Posterior vena cava (tissue), 2 donors: ENCODE measurements at regions of chr7 and their contacts with region 1.

Region 1: DNA sequence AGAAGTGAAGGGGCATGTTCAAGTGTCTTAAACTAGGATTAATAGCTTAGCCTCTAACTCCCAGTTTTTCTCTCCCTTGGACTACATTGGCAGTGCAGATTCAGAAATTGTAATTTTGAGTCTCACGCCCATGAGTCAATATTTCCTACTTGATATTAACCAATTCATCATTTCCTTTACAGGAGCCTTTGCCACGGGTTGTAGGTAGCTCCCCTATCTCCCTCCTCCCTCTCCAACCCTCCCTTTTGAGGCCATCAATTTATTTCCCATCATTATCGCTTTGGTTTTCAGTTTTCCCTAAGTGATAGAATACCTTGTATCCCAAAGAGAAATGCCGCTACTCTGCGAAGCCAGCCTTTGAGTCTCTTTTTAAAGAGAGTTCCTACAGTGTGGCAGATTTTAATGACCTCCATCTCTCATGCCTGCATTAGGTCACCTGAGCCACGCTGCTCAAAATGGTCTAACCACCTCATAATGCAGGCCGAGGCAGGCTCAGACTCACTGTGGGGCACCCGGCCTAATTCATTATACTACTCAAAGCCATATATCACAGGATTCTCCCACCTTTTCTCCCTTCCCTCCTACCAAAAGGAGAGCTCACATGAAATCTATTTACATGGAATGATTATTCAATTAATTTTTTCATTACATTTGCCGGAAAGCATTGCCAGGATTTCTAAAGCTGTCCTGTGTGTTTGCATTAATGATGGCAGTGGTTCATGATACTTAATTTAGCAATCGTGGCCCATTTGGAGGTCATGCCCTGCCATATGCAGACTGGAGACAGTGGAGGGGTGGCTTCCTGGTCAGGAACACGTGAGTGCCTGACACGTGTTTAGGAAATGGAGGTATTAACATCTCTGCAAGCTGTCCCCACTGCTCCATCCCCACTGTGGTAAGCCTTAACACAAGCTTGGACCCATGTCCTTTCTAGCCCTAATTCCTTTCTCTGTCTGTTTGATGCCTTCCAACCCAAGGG is 448.2 kb upstream of the AUTS2 start:
- DNase-seq: no peak

Region 2: DNA sequence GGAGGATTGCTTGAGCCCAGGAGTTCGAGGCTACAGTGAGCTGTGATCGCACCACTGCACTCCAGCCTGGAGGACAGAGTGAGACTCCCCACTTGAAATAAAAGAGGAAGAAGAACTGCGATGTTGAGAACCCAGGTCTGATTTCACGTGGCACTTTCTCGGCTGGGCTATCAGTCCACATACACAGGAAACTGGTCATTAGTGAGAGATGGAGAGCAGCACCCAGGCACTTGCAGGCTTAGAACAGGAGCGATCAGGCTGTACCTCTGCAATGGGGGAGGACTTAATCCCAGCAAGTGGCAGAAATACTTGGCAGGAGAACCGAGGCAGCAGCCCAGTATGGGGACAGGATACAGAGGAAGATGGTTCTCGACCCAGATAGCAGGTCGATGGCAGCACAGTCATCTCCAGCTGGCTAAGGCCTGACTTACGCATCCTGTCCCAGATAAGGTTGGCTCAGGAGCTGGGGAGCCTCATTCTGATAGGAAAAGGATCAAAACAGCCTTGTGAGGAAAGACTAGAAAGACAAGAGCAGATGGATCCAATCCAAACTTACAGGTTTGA is 39.5 kb before region 1 on chr7:
- intact Hi-C with region 1: loop called in 1 of 2 experiments (anchors 1 kb)
- DNase-seq: no peak

Region 3: DNA sequence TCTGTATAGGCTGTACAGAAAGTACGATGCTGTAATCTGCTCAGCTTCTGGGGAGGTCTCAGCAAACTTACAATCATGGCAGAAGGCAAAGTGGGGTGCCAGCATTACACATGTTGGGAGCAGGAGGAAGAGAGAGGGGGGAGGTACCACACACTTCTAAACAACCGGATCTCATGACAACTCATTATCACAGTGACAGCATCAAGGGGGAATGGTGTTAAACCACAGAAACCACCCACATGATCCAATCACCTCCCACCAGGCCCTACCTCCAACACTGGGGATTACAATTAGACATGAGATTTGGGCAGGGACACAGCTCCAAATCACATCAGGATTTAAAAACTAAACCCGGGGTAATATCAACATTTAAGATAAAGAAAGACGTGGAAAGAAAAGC is 20.6 kb before region 1 on chr7:
- intact Hi-C with region 1: no loop called
- DNase-seq: no peak

Region 4: DNA sequence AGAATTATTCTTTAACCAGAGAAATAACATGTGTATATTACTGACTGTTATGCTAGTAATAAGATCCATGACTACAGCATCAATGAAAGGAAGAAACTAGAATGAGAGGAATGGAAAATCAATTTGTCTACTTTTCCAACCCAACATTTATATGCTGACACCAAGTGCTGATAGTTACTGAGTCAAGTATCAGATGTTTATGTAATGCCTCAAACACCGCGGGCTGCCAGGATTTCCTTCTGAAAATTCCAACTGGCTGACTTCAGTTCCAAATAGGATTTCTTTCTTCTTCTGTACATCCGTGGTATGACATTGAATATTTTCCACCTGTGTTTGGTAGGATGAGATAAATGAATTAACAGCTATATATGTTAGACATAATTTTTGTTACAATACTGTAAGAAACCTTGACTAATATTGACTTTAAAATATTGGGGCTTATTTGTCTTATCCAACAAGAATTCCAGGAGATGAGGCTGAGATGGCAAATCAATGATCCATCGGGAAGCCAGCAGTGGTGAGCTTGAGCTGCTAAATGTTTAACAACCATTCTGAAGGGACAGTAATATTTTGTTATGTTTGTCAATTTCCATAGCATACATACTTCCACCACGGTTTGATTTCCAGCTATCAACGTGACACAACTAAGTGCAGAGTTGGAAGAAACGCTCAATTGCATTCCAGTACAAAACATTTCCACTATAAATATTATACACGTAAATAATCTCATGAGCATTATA is 13.0 kb after region 1 on chr7:
- intact Hi-C with region 1: no loop called
- DNase-seq: no peak